ENCODE measurements at regions of chr4 and their contacts with region 1.

Region 1: GRCh38 chr4:112231779-112232713 is at the start of gene AP1AR:
- DNase-seq: peak; percentile 85 to 90 (median 88)
- ATAC-seq: peak; percentile 90
- H3K4me3 ChIP-seq: peak within 1 kb of the TSS; percentile 84
- H3K27ac ChIP-seq: peak within 1 kb of the TSS; percentile 96
- H3K4me1 ChIP-seq: peaks cover 0 to 11% of the 10 kb centered on the region in 2 experiments; a peak in 2 of 5 replicates
- H3K27me3 ChIP-seq: no peaks in the 10 kb centered on the region
- CTCF ChIP-seq: peak; percentile 47 to 59 (median 51); a peak in 5 of 6 replicates
- EP300 ChIP-seq: no peak
- POLR2A ChIP-seq: peak; percentile 90
- RAD21 ChIP-seq: no peak
- polyA plus RNA-seq, gene AP1AR: 2.6 to 2.7 TPM

Region 2: GRCh38 chr4:112075129-112075753 is 156.8 kb before region 1 on chr4:
- CTCF ChIA-PET with region 1: no interaction called
- POLR2A ChIA-PET with region 1: no interaction called
- in situ Hi-C with region 1: no loop called
- intact Hi-C with region 1: loop called (anchors 1 kb)
- DNase-seq: peak; percentile 51 to 61 (median 54)
- ATAC-seq: peak; percentile 94
- H3K4me3 ChIP-seq: no peak overlapping the region
- H3K27ac ChIP-seq: no peak overlapping the region
- H3K4me1 ChIP-seq: no peaks in the 10 kb centered on the region
- H3K27me3 ChIP-seq: no peaks in the 10 kb centered on the region
- CTCF ChIP-seq: peak; percentile 60 to 82 (median 81)
- EP300 ChIP-seq: no peak
- POLR2A ChIP-seq: no peak
- RAD21 ChIP-seq: peak; percentile 34 to 70; a peak in 3 of 4 replicates

Region 3: GRCh38 chr4:112145820-112146813 is 85.9 kb before region 1 on chr4:
- CTCF ChIA-PET with region 1: no interaction called
- POLR2A ChIA-PET with region 1: interaction called, 3 read pairs
- in situ Hi-C with region 1: no loop called
- intact Hi-C with region 1: loop called (anchors 2 kb)
- DNase-seq: peak; percentile 42 to 67 (median 52)
- ATAC-seq: peak; percentile 65
- H3K4me3 ChIP-seq: peak overlapping the region; percentile 65
- H3K27ac ChIP-seq: peak overlapping the region; percentile 79
- H3K4me1 ChIP-seq: peaks cover 10% of the 10 kb centered on the region in 2 experiments; a peak in 3 of 5 replicates
- H3K27me3 ChIP-seq: no peaks in the 10 kb centered on the region
- CTCF ChIP-seq: peak in 1 of 3 experiments; percentile 1; a peak in 1 of 6 replicates
- EP300 ChIP-seq: no peak
- POLR2A ChIP-seq: 0 out of 2 replicates have a peak, but pooled peaks have one; percentile 12
- RAD21 ChIP-seq: no peak

Region 4: DNA sequence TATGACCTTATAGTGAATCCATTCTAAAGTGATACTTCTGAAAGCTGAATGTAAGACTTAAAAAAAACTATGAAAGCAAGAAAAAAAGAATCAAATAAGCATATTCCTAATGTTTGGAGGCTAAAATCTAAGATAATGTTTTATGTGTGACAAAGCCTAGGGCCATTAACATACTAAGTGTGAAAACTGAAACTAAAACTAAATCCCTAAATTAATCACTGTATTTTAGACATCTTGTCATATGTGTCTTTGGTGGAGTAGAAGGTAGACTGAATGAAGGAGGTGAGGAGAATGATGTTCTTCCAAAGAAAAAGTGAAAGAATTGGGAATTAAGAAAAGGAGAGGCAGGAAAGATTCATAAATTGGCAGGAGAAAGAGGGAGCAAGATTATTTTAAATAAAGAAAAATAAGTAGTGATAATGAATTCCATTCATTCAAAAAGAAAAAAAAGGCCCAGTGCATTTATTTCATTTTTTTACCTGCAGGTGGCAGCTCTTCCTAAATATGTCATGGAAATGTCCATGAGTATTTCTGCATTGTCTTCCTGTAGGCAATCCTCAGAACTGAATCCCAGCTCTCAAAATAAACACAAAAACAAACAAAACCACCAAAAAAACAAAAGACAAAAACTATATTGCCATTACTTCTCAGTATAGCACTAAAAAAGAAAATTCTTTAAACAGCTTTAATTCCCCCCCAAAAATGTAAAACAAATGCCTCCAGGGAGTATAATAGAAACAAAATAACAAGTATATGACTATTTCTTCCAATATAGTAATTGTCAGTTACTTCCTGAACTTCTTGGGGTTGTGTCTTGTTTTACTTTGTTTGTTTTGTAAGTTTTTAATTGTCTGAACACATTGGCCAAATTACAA is 17.4 kb before region 1 on chr4:
- CTCF ChIA-PET with region 1: interaction called, 4 read pairs
- POLR2A ChIA-PET with region 1: interaction called, 3 read pairs
- in situ Hi-C with region 1: no loop called
- intact Hi-C with region 1: loop called (anchors 1 kb)
- DNase-seq: peak; percentile 31 to 34 (median 32)
- ATAC-seq: peak; percentile 76
- H3K4me3 ChIP-seq: no peak overlapping the region
- H3K27ac ChIP-seq: no peak overlapping the region
- H3K4me1 ChIP-seq: no peaks in the 10 kb centered on the region
- H3K27me3 ChIP-seq: no peaks in the 10 kb centered on the region
- CTCF ChIP-seq: peak; percentile 23 to 67 (median 45); a peak in 3 of 6 replicates
- EP300 ChIP-seq: no peak
- POLR2A ChIP-seq: no peak
- RAD21 ChIP-seq: peak; percentile 59

Measured in K562 (cell line).